Dendritic cell treated with granulocyte-macrophage colony-stimulating factor and Interleukin-4, amounts not matched to agents 40 ng/mL and 50 ng/mL, for 4 days (primary cell): ENCODE measurements at regions of chr9 and their contacts with region 1.

Region 1: GRCh38 chr9:72038890-72039410 is 21.5 kb downstream of the C9orf57 start:
- H3K4me3 Mint-ChIP-seq: no peak overlapping the region
- H3K27ac Mint-ChIP-seq: no peak overlapping the region
- H3K4me1 Mint-ChIP-seq: peaks cover 23% of the 10 kb centered on the region
- H3K27me3 Mint-ChIP-seq: peaks cover 6% of the 10 kb centered on the region

Region 2: GRCh38 chr9:72271613-72272478 is 232.9 kb after region 1 on chr9:
- intact Hi-C with region 1: loop called (anchors 1 kb)
- H3K4me3 Mint-ChIP-seq: no peak overlapping the region
- H3K27ac Mint-ChIP-seq: no peak overlapping the region
- H3K4me1 Mint-ChIP-seq: peaks cover 12% of the 10 kb centered on the region
- H3K27me3 Mint-ChIP-seq: peaks cover 4% of the 10 kb centered on the region

Region 3: GRCh38 chr9:72827950-72828731 is 789.2 kb after region 1 on chr9:
- intact Hi-C with region 1: loop called (anchors 2 kb)
- H3K4me3 Mint-ChIP-seq: no peak overlapping the region
- H3K27ac Mint-ChIP-seq: no peak overlapping the region
- H3K4me1 Mint-ChIP-seq: peaks cover 11% of the 10 kb centered on the region
- H3K27me3 Mint-ChIP-seq: no peaks in the 10 kb centered on the region

Region 4: DNA sequence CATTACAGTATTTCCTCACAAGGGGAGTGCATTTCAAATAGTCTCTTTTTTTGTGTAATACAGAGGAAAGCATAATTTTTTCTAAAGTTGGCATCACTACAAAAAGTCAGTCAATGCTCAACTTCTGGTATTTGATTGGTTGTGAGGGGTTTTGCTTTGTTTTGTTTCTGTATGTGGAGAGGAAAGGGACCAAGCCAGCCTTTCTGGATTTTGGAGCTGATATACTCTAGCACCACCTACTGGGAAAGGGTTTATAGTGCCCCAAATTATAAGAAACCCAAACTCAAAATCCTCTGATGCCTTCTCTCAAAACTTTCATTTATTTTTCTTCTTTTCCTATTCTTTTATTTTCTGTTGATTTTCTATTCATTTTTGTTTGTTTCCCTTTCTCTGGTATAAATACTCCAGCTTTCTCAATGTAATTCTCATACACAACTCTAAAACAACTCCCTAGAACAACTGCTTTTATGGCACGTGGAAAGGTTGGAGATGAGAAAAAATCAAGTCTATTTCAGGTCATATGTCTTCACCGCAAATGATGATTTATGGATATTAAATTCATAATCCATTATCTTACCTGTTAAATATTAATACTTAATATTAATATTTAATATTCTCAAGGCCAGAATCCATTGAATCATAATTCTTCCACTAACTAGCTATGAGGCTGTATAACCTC is 1043.2 kb after region 1 on chr9:
- intact Hi-C with region 1: loop called (anchors 5 kb)
- H3K4me3 Mint-ChIP-seq: no peak overlapping the region
- H3K27ac Mint-ChIP-seq: no peak overlapping the region
- H3K4me1 Mint-ChIP-seq: no peaks in the 10 kb centered on the region
- H3K27me3 Mint-ChIP-seq: no peaks in the 10 kb centered on the region

Region 5: DNA sequence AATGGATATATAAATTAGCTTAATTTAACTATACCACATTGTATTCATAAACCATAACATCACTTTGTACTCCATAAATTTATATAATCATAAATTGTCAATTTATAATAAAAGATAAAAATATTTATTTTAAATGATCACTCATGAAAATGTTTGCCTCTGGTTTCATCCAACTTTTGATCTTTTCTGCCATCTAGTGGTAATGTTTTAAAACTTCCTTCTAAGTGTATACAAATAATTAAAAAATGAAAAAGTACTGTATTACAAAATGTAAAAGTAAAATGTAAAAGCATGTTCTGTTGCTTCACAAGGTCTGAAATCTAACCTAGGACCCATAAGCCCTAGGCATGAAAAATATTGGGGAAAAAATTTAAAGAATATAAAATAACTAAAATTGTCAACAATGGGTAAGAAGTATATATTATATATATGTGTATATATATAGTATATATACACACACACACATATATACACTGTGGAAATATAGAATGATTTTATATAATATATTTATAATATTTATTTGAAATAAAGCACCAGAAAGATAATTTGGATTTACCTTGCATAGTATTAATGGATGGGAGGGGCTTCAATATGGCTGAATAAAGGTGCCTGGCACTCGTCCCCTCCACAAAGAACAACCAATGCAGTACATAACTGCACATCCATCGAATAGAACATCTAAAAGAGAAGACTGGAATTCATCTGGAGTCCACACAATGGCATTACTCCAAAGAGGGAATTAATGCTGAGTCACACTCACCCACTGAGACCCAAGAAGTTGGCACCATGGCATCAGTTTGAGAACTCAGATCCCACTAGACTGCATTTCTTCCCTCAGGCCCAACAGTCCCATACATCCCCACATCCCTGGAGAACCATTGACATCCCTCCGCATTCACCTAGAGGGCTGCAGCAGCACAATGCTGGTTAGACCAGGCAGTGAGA is 1145.2 kb after region 1 on chr9:
- intact Hi-C with region 1: loop called (anchors 10 kb)
- H3K4me3 Mint-ChIP-seq: no peak overlapping the region
- H3K27ac Mint-ChIP-seq: no peak overlapping the region
- H3K4me1 Mint-ChIP-seq: no peaks in the 10 kb centered on the region
- H3K27me3 Mint-ChIP-seq: no peaks in the 10 kb centered on the region